GM12878 (cell line): ENCODE measurements at regions of chr2 and their contacts with region 1.

Region 1: DNA sequence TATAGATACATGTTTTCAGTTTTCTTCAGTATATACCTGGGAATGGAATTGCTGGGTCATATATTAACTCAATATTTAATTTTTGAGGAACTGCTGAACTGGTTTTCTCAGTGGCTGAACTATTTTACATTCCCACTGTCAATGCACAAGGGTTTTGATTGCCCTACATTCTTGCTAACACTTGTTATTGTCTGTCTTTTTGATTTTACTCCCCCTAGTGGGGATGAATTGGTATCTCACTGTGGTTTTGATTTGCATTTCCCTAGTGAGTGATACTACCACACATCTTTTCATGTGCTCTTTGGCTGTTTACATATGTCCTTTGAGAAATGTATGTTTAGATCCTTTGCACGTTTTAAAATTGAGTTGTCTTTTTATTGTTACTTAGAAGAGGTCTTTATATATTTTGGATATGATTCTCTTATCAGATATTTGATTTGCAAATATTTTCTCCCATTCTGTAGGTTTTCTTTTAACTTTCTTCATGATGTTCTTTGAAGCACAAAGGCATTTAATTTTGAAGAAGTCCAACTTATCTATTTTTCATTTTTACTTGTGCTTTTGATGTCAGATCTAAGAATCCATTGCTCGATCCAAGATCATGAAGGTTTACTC is 36.2 kb downstream of the ASB1 start:
- DNase-seq: peak; percentile 13
- ATAC-seq: peak; percentile 93
- H3K4me3 ChIP-seq: no peak overlapping the region
- H3K27ac ChIP-seq: no peak overlapping the region
- H3K4me1 ChIP-seq: no peaks in the 10 kb centered on the region
- H3K27me3 ChIP-seq: no peaks in the 10 kb centered on the region
- CTCF ChIP-seq: peak; percentile 51 to 67 (median 56); a peak in 5 of 6 replicates
- EP300 ChIP-seq: no peak
- POLR2A ChIP-seq: no peak
- RAD21 ChIP-seq: peak; percentile 55

Region 2: GRCh38 chr2:238362626-238363025 is 100.3 kb before region 1 on chr2:
- CTCF ChIA-PET with region 1: interaction called, 6 read pairs
- POLR2A ChIA-PET with region 1: no interaction called
- RAD21 ChIA-PET with region 1: no interaction called
- SMC1A ChIA-PET with region 1: no interaction called
- in situ Hi-C with region 1: no loop called
- intact Hi-C with region 1: loop called (anchors 1 kb)
- DNase-seq: no peak
- ATAC-seq: no peak
- H3K4me3 ChIP-seq: no peak overlapping the region
- H3K27ac ChIP-seq: no peak overlapping the region
- H3K4me1 ChIP-seq: peaks cover 4% of the 10 kb centered on the region; the same call in 1 of the 2 replicates
- H3K27me3 ChIP-seq: no peaks in the 10 kb centered on the region
- CTCF ChIP-seq: no peak
- EP300 ChIP-seq: no peak
- POLR2A ChIP-seq: no peak
- RAD21 ChIP-seq: no peak

Region 3: GRCh38 chr2:238370823-238371372 is 92.0 kb before region 1 on chr2:
- CTCF ChIA-PET with region 1: interaction called, 22 read pairs
- POLR2A ChIA-PET with region 1: no interaction called
- RAD21 ChIA-PET with region 1: interaction called, 3 read pairs
- SMC1A ChIA-PET with region 1: interaction called, 4 read pairs
- in situ Hi-C with region 1: no loop called
- intact Hi-C with region 1: loop called (anchors 1 kb)
- DNase-seq: no peak
- ATAC-seq: peak; percentile 91
- H3K4me3 ChIP-seq: no peak overlapping the region
- H3K27ac ChIP-seq: no peak overlapping the region
- H3K4me1 ChIP-seq: no peaks in the 10 kb centered on the region
- H3K27me3 ChIP-seq: no peaks in the 10 kb centered on the region
- CTCF ChIP-seq: peak; percentile 57 to 69 (median 58); a peak in 5 of 6 replicates
- EP300 ChIP-seq: no peak
- POLR2A ChIP-seq: no peak
- RAD21 ChIP-seq: peak; percentile 73